ENCODE measurements at regions of chr22 and their contacts with region 1.

Region 1: GRCh38 chr22:41966607-41967240 is 2.5 kb upstream of the SEPTIN3 start:
- DNase-seq: peak; percentile 48
- ATAC-seq: peak; percentile 77
- H3K4me3 ChIP-seq: no peak overlapping the region
- H3K27ac ChIP-seq: no peak overlapping the region
- H3K4me1 ChIP-seq: peaks cover 0 to 17% of the 10 kb centered on the region in 2 experiments; a peak in 1 of 4 replicates
- H3K27me3 ChIP-seq: no peaks in the 10 kb centered on the region
- CTCF ChIP-seq: peak; percentile 37 to 58 (median 42); a peak in 4 of 6 replicates
- POLR2A ChIP-seq: no peak
- RAD21 ChIP-seq: peak; percentile 67

Region 2: DNA sequence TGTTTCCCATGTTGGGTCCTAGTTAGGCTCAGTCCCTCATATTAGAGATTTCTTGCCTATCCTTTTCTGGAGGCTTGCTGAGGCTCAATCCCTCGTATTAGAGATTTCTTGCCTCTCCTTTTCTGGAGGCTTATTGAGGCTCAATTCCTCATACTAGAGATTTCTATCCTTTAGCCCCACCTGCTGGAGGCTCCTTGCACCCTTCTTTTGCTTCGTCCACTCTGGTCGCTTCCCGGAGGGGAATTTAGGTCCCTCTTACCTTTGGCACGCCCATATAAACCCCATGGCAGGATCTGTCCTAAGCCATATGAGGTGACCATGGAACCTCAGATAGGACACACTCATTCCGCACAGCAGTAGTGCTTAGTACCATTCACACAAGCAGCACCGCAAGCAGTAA is 148.0 kb after region 1 on chr22:
- CTCF ChIA-PET with region 1: interaction called, 3 read pairs
- POLR2A ChIA-PET with region 1: no interaction called
- RAD21 ChIA-PET with region 1: no interaction called
- intact Hi-C with region 1: loop called (anchors 5 kb)
- DNase-seq: peak; percentile 26
- ATAC-seq: peak; percentile 68
- H3K4me3 ChIP-seq: no peak overlapping the region
- H3K27ac ChIP-seq: no peak overlapping the region
- H3K4me1 ChIP-seq: no peaks in the 10 kb centered on the region
- H3K27me3 ChIP-seq: no peaks in the 10 kb centered on the region
- CTCF ChIP-seq: peak; percentile 45 to 57 (median 50); a peak in 5 of 6 replicates
- POLR2A ChIP-seq: no peak
- RAD21 ChIP-seq: peak; percentile 63

Region 3: GRCh38 chr22:42444077-42444904 is 477.6 kb after region 1 on chr22:
- CTCF ChIA-PET with region 1: no interaction called
- POLR2A ChIA-PET with region 1: no interaction called
- RAD21 ChIA-PET with region 1: no interaction called
- intact Hi-C with region 1: loop called (anchors 2 kb)
- DNase-seq: peak; percentile 67
- ATAC-seq: peak; percentile 89
- H3K4me3 ChIP-seq: peak overlapping the region; percentile 40 to 49
- H3K27ac ChIP-seq: peak overlapping the region; percentile 29; the same call in 1 of the 2 replicates
- H3K4me1 ChIP-seq: peaks cover 11 to 21% of the 10 kb centered on the region in 2 experiments
- H3K27me3 ChIP-seq: no peaks in the 10 kb centered on the region
- CTCF ChIP-seq: peak; percentile 75 to 92 (median 90)
- POLR2A ChIP-seq: peak; percentile 44
- RAD21 ChIP-seq: peak; percentile 86